Activated CD4-positive, alpha-beta memory T cell treated with anti-CD3 and anti-CD28 coated beads, Interleukin-2, amount 10 ng/mL, durations not matched to agents 7 days and 5 days (primary cell): ENCODE measurements at regions of chr22 and their contacts with region 1.

Region 1: DNA sequence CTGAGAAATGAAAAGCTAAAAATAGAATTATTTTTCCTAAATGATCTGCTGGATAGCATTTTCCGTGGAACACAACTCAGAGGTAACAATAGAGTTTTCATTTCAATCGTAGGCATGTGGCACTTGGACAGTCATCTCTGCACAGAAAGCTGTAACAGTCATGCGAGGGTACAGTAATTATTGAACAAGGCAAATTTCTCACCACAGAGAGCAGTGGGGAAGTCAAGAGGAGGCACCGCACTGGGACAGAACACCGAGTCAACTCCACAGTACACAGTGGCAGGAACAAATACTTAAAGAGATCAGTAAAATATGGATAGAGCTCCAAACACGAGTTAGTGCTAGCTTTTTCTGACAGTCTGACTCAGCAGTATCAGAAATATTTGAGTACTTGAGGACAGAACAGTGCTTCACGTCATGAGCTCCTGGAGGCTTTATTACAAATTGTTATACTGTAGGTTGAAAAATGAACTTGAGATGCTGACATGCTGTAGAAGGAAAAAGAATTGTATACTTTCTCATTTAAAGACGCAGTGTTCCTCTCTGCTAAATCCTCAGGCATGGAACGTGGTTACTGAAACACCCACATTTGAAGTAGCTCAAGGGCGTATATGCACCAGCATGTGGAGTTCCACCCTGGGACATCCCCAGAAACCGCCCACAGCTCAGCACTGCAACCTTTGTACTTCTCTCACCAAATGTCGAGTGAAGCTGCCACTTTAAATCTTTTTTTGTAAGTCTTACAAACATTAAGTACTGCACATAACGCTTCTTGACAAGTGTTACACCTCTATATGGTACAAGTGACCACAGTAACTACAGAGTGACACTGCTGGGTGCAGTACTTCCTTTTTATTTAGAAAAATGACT is 27.4 kb upstream of the YPEL1 start:
- DNase-seq: peak; percentile 40
- H3K4me3 Mint-ChIP-seq: no peak overlapping the region
- H3K27ac Mint-ChIP-seq: peak overlapping the region; percentile 67
- H3K4me1 Mint-ChIP-seq: peaks cover 77% of the 10 kb centered on the region
- H3K27me3 Mint-ChIP-seq: no peaks in the 10 kb centered on the region

Region 2: GRCh38 chr22:21735200-21736076 is 27.5 kb before region 1 on chr22 and contains the start of gene YPEL1:
- CTCF ChIA-PET with region 1: interaction called, 3 read pairs
- POLR2A ChIA-PET with region 1: interaction called, 13 read pairs
- DNase-seq: peak; percentile 97
- H3K4me3 Mint-ChIP-seq: peak within 1 kb of the TSS; percentile 90
- H3K27ac Mint-ChIP-seq: peak within 1 kb of the TSS; percentile 82
- H3K4me1 Mint-ChIP-seq: peaks cover 19% of the 10 kb centered on the region
- H3K27me3 Mint-ChIP-seq: peaks cover 19% of the 10 kb centered on the region
- total RNA-seq, gene YPEL1: 17.3 to 17.5 TPM